ENCODE measurements at regions of chr5 and their contacts with region 1.

Region 1: DNA sequence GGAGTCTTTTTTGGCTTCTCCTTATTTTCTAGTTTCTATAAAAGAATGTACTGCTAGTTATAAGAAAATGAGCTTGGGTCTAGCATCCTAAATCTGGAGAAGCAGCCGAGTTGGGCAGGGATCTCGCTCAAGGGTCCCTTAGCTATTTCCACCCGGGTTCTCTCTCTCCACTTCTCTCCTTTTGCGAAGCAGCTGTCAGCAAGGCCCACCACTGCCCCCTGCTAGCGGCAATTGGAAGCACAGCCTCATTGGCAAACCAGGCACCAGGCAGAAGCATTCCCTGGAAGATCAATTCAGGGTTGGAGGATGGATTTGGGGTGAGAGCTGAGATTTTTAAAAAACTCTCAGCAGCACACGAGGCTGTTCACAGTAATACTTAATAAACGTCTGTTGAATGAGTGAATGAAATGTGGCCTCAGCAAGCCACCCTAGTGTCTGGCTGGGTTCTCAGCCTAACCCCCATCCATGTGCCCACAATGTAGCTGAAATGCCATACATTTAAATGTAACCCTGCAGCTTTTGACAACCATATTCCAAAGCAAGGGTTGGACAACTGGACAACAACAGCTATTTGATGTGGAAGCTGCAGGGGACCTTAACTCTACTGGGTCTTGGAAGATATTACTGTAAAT is 34.6 kb upstream of the TNIP1 start:
- DNase-seq: peak; percentile 40
- H3K4me3 Mint-ChIP-seq: no peak overlapping the region
- H3K27ac Mint-ChIP-seq: no peak overlapping the region
- H3K4me1 Mint-ChIP-seq: peaks cover 5% of the 10 kb centered on the region
- H3K27me3 Mint-ChIP-seq: no peaks in the 10 kb centered on the region

Region 2: DNA sequence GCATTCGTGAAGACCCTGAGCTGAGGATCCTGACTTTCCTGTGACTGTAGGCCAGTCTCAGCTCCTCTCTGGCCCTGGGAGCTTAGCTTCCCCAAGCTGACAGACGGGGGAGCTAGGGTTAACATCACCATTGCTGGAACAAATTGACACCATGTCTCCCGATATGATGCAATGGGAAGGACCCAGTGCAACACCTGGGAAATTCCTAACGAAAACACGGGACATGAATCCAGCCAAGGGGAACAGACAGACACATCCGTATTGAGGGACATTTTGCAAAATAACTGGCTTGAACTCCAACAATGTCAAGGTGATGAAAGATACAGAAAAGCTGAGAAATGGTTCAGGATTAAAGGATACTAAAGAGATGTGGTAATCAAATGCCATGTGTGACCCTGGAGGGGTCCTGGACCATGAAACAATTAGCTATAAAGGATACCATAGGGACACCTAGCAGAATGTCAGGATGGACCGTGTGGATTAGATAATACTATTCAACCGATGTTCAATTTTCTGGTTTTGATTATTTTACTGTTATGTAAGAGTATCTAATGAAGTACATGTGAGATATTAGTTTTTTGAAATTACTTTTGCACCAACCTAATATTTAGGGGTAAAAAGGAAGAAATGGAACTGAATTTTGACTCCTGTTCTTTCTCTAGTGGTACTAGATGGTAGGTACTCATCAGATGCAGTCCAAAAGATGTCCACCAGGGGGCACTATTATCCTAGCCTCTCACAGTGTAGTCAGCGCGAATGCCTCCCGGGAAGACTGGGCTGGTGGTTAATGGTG is 554.8 kb before region 1 on chr5:
- intact Hi-C with region 1: loop called (anchors 2 kb)
- DNase-seq: peak; percentile 71
- H3K4me3 Mint-ChIP-seq: no peak overlapping the region
- H3K27ac Mint-ChIP-seq: no peak overlapping the region
- H3K4me1 Mint-ChIP-seq: no peaks in the 10 kb centered on the region
- H3K27me3 Mint-ChIP-seq: peaks cover 7% of the 10 kb centered on the region

Region 3: GRCh38 chr5:150801117-150801927 is 314.1 kb before region 1 on chr5:
- intact Hi-C with region 1: loop called (anchors 5 kb)
- DNase-seq: no peak
- H3K4me3 Mint-ChIP-seq: no peak overlapping the region
- H3K27ac Mint-ChIP-seq: no peak overlapping the region
- H3K4me1 Mint-ChIP-seq: peaks cover 20% of the 10 kb centered on the region
- H3K27me3 Mint-ChIP-seq: peaks cover 3% of the 10 kb centered on the region

Region 4: GRCh38 chr5:151051066-151051930 is 64.1 kb before region 1 on chr5:
- intact Hi-C with region 1: loop called (anchors 1 kb)
- DNase-seq: peak; percentile 40
- H3K4me3 Mint-ChIP-seq: no peak overlapping the region
- H3K27ac Mint-ChIP-seq: peak overlapping the region; percentile 44
- H3K4me1 Mint-ChIP-seq: peaks cover 34% of the 10 kb centered on the region
- H3K27me3 Mint-ChIP-seq: no peaks in the 10 kb centered on the region

Region 5: GRCh38 chr5:151093476-151093889 is 21.9 kb before region 1 on chr5:
- intact Hi-C with region 1: loop called (anchors 2 kb)
- DNase-seq: no peak
- H3K4me3 Mint-ChIP-seq: peak overlapping the region; percentile 67
- H3K27ac Mint-ChIP-seq: peak overlapping the region; percentile 82
- H3K4me1 Mint-ChIP-seq: peaks cover 80% of the 10 kb centered on the region
- H3K27me3 Mint-ChIP-seq: no peaks in the 10 kb centered on the region

Measured in activated T-helper 1 cell treated with anti-CD3 and anti-CD28 coated beads, Interleukin-12 subunit alpha, Interleukin-12 subunit beta, Interleukin-2, Interleukin-4 antibody, amounts not matched to agents 30 ng/mL and 10 ng/mL and 1 ng/mL, durations not matched to agents 14 hours and 24 hours and 36 hours (primary cell).